ENCODE measurements at regions of chr4 and their contacts with region 1.

Region 1: GRCh38 chr4:54233277-54233696 is 4.2 kb downstream of the PDGFRA start:
- DNase-seq: peak; percentile 52 to 68 (median 66)
- H3K4me3 ChIP-seq: peak overlapping the region in 1 of 2 donors; percentile 58
- H3K4me3 Mint-ChIP-seq: peak overlapping the region; percentile 82 to 88 (median 85)
- H3K27ac ChIP-seq: no peak overlapping the region
- H3K27ac Mint-ChIP-seq: no peak overlapping the region
- H3K4me1 ChIP-seq: peaks cover 17% of the 10 kb centered on the region
- H3K4me1 Mint-ChIP-seq: peaks cover 9 to 36% (median 23%) of the 10 kb centered on the region in 4 donors
- H3K27me3 ChIP-seq: peaks cover 13% of the 10 kb centered on the region
- H3K27me3 Mint-ChIP-seq: peaks cover 39 to 48% of the 10 kb centered on the region in 2 donors

Region 2: GRCh38 chr4:52545099-52546069 is 1687.9 kb before region 1 on chr4:
- CTCF ChIA-PET with region 1: no interaction called
- POLR2A ChIA-PET with region 1: no interaction called
- intact Hi-C with region 1: loop called (anchors 5 kb)
- DNase-seq: peak; percentile 47 to 62 (median 56)
- H3K4me3 ChIP-seq: no peak overlapping the region
- H3K4me3 Mint-ChIP-seq: no peak overlapping the region
- H3K27ac ChIP-seq: no peak overlapping the region
- H3K27ac Mint-ChIP-seq: peak overlapping the region in 1 of 7 donors; percentile 42
- H3K4me1 ChIP-seq: no peaks in the 10 kb centered on the region
- H3K4me1 Mint-ChIP-seq: no peaks in the 10 kb centered on the region
- H3K27me3 ChIP-seq: no peaks in the 10 kb centered on the region
- H3K27me3 Mint-ChIP-seq: peaks cover 5 to 9% of the 10 kb centered on the region in 2 donors

Region 3: DNA sequence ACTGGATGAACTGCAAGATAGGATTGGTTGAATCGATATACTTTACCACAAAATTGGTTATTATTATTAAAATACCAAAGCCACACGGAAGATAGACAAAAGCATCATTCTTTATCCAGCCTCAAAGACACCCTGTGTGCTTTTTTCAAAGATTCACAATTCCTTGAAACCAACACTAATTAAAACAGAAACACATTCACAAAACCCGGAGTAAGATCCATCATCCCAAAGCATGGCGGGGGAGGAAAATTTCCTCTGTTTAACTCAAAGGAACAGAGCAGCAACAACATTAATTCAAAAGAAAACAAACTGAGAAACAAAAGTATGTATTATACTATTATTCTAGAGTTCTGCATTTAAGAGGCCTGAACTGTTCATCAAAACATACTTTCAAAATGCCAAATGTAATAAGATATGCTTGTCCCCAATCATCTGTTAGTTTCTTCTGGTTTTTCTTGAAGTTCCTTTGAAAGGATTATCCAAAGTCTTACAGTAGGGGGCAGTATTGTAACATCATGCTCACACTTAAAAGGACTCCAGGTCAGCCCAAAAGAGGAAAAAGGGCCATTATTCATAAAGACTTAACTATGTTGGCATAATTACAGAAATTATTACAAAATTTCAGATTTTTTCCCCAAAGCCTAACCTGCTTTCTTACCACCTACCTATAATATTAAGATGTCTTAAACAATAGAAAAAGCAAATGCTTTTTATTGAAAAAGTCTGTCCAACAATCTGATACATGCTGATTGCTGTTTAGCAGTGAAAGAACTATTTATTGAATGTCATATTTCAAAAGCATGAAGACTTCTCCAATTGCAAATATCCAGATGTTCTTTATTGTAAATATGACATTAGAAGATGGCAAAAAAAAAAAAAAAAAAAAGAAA is 1036.2 kb before region 1 on chr4:
- CTCF ChIA-PET with region 1: interaction called, 29 read pairs
- POLR2A ChIA-PET with region 1: no interaction called
- intact Hi-C with region 1: loop called (anchors 1 kb)
- DNase-seq: peak in 4 of 5 donors; percentile 37 to 55 (median 52)
- H3K4me3 ChIP-seq: no peak overlapping the region
- H3K4me3 Mint-ChIP-seq: no peak overlapping the region
- H3K27ac ChIP-seq: no peak overlapping the region
- H3K27ac Mint-ChIP-seq: no peak overlapping the region
- H3K4me1 ChIP-seq: no peaks in the 10 kb centered on the region
- H3K4me1 Mint-ChIP-seq: peaks cover 0 to 2% (median 0%) of the 10 kb centered on the region in 4 donors
- H3K27me3 ChIP-seq: no peaks in the 10 kb centered on the region
- H3K27me3 Mint-ChIP-seq: no peaks in the 10 kb centered on the region

Region 4: DNA sequence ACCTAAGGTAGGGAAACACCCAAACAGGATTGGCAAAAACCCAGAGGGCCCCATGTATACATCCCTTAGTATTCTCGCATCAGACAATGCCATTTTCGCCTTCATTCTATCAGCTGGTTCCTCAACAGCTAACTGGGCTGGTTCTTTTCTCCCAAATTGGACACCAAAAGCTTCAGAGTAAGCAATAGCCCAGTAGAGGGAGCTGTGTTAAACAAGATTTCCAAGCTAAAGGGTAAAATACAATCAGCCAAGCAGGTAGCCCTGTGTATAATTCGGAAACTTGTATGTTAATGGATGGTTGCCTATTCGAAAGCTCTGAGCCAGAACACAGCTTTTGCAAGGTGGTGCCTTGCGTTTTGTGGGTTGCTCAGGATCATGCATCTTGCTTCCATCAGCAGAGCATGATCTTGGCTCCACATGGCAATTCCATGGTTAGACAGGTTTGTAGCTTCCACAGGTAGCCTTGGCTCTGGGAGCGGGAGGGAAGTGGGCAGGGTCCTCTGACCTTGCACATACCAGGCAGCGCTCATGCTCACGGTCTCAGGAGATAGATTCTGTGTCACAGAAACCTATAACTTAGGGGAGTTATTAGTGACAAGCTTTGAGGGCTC is 526.8 kb before region 1 on chr4:
- CTCF ChIA-PET with region 1: interaction called, 6 read pairs
- POLR2A ChIA-PET with region 1: no interaction called
- intact Hi-C with region 1: loop called (anchors 1 kb)
- DNase-seq: no peak
- H3K4me3 ChIP-seq: no peak overlapping the region
- H3K4me3 Mint-ChIP-seq: no peak overlapping the region
- H3K27ac ChIP-seq: no peak overlapping the region
- H3K27ac Mint-ChIP-seq: no peak overlapping the region
- H3K4me1 ChIP-seq: no peaks in the 10 kb centered on the region
- H3K4me1 Mint-ChIP-seq: peaks cover 2 to 11% (median 7%) of the 10 kb centered on the region in 4 donors
- H3K27me3 ChIP-seq: no peaks in the 10 kb centered on the region
- H3K27me3 Mint-ChIP-seq: peaks cover 4% of the 10 kb centered on the region in 2 donors

Region 5: GRCh38 chr4:53920116-53920515 is 313.2 kb before region 1 on chr4:
- CTCF ChIA-PET with region 1: interaction called, 188 read pairs
- POLR2A ChIA-PET with region 1: no interaction called
- intact Hi-C with region 1: no loop called
- DNase-seq: no peak
- H3K4me3 ChIP-seq: no peak overlapping the region
- H3K4me3 Mint-ChIP-seq: no peak overlapping the region
- H3K27ac ChIP-seq: no peak overlapping the region
- H3K27ac Mint-ChIP-seq: no peak overlapping the region
- H3K4me1 ChIP-seq: no peaks in the 10 kb centered on the region
- H3K4me1 Mint-ChIP-seq: no peaks in the 10 kb centered on the region
- H3K27me3 ChIP-seq: no peaks in the 10 kb centered on the region
- H3K27me3 Mint-ChIP-seq: peaks cover 0 to 2% of the 10 kb centered on the region in 2 donors

Measured in CD4-positive, alpha-beta memory T cell (primary cell).